ENCODE measurements at regions of chr11 and their contacts with region 1.

Region 1: DNA sequence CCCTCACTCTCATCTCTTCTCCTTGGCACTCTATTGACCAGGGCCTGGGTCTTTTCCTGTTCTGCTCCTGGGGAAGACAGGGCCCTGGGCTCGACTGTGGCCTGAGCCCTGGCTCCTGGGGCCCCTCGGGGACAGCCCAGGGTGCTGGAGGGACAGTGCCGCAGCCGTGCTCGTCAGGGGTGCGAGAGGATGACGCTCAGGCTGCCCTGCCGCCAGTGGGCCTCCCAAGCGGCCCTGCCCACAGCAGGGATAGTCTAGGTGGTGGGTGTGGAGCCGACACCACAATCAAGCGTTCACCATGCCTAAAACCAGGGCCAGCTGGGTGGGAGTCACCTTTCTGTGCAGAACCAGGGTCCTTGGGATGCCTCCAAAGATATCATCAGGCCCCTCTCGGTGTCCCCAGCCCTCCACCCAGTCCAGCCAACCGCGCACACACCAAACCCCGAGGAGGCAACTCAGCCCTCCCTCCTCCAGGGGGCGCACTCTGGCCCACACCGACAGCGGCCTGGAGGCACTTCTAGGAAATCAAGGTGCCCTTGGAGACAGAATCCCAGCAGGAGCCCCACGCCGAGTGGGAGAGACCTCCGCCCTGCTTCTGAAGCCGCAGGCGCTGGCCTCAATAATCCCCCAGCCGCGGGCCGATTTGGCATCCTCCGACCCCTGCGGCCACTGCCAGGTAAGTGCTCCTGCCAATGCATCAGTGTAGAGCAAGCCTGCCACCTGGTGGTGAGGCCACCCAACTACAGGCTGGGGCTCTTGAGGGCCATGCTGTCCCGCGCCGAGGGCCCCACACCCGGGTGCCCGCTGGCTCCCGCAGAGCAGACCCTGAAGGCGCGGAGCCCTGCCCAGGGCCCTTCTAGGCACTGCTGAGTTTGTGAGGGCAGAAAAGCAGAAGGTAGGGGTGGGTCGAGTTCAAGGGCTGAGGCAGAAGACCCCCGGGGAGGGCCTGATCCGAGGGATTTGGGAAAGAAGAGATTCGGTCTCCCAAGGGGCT is 496.4 kb downstream of the BUD13 start:
- DNase-seq: peak; percentile 84
- H3K4me3 Mint-ChIP-seq: no peak overlapping the region
- H3K27ac Mint-ChIP-seq: no peak overlapping the region
- H3K4me1 Mint-ChIP-seq: no peaks in the 10 kb centered on the region
- H3K27me3 Mint-ChIP-seq: peaks cover 15% of the 10 kb centered on the region

Region 2: GRCh38 chr11:114774599-114775361 is 1501.6 kb before region 1 on chr11:
- CTCF ChIA-PET with region 1: no interaction called
- intact Hi-C with region 1: loop called (anchors 10 kb)
- DNase-seq: peak; percentile 40
- H3K4me3 Mint-ChIP-seq: no peak overlapping the region
- H3K27ac Mint-ChIP-seq: no peak overlapping the region
- H3K4me1 Mint-ChIP-seq: no peaks in the 10 kb centered on the region
- H3K27me3 Mint-ChIP-seq: peaks cover 20% of the 10 kb centered on the region

Region 3: DNA sequence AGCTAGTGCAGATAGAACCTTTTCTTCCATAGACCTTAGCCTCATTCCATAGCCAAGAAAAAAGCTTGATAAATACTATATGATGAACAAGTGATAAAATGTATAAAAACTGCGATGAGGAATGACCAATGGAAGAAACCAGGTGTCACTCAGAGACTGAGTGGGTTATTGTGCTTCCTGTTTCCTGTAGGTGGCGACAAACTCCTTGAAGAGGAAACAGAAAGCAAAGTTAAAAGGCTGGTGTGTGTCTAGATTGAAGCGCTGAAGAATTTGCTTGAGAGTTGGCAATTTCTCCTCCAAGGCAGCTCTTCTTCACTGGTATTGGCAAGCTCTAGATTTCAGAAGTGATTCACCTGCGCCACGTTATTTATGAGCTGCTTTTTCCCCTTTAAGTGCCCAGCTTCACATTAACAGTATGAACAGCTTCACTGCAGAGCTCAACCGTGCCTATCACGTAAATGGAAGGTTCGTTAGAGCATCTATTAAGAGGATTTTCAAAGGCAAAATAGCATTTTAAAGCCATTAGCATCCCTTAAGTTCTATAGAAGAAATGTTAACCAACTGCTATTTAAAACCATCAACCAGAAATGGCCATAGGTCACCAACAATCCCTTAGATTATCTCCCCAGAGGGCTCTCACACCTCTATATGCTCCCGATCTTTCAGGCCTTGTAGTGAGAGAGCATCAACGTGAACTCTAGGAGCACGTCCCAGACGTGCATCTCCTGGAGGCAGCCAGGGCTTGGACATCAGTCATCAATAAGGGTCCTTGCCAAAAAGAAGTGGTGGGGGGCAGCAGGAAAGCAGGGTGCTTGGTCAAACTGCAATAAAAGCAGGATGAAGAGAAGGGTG is 951.5 kb before region 1 on chr11:
- CTCF ChIA-PET with region 1: no interaction called
- intact Hi-C with region 1: loop called (anchors 1 kb)
- DNase-seq: peak; percentile 34
- H3K4me3 Mint-ChIP-seq: no peak overlapping the region
- H3K27ac Mint-ChIP-seq: no peak overlapping the region
- H3K4me1 Mint-ChIP-seq: peaks cover 2% of the 10 kb centered on the region
- H3K27me3 Mint-ChIP-seq: peaks cover 3% of the 10 kb centered on the region

Region 4: DNA sequence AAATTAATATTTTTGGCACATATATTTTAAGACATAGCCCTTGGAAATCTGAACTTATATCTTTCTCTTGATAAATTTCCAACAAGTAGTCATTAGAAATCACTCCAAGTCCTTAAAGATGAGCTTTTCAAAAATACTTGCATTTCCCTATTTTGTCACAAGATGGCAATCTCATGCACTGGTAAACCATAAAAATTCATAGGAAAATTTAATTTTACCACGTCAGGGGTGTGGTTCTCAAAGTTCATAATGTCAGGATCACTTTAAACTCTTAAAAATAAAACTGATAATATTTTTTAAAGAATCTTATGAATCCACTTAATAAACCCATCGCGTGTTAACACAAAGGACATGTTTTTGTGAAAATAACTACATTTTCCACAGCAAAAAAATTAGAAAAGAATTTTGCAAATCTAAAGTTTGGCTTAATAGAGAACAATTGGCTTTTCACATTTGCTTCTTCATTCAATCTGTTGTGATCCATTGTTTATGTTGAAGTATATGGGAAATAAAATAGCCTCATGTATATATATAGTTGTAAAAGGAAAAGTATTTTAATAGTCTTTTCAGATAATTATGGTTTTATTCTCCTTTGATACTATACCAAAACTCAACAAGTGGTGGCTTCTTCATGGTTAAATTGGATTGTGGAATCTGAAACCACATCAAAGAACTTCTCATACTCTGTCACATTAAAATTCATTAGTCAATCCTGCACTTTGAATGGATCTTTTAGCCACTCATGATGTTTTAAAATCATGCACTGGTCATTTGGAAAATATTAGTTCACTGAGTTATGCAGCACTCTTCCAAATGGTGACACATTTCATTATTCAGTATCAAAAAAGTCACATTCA is 941.2 kb before region 1 on chr11:
- CTCF ChIA-PET with region 1: no interaction called
- intact Hi-C with region 1: loop called (anchors 1 kb)
- DNase-seq: no peak
- H3K4me3 Mint-ChIP-seq: no peak overlapping the region
- H3K27ac Mint-ChIP-seq: no peak overlapping the region
- H3K4me1 Mint-ChIP-seq: no peaks in the 10 kb centered on the region
- H3K27me3 Mint-ChIP-seq: peaks cover 7% of the 10 kb centered on the region

Region 5: GRCh38 chr11:116217006-116217405 is 59.3 kb before region 1 on chr11:
- CTCF ChIA-PET with region 1: interaction called, 5 read pairs
- intact Hi-C with region 1: loop called (anchors 2 kb)
- DNase-seq: peak; percentile 32
- H3K4me3 Mint-ChIP-seq: no peak overlapping the region
- H3K27ac Mint-ChIP-seq: no peak overlapping the region
- H3K4me1 Mint-ChIP-seq: no peaks in the 10 kb centered on the region
- H3K27me3 Mint-ChIP-seq: peaks cover 2% of the 10 kb centered on the region

Region 6: DNA sequence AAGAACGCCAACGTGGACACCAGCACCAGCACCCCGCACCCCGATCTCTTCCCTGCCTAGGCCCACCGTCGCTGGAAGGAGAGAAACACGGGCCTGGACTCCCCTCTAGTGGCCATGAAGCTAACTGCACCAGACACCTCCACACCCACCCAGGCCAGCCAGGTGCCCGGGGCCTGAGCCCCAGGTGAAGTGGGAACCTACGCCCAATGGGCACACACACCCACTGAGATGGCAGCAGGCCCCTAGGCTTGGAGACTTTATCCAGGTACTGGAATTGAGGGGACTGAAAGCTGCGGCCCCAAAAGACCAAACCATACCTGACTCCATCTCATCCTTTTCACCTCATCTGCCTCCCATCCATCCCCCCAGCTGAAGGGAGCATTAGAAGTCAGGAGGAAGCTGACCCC is 415.4 kb after region 1 on chr11:
- CTCF ChIA-PET with region 1: no interaction called
- intact Hi-C with region 1: loop called (anchors 5 kb)
- DNase-seq: peak; percentile 68
- H3K4me3 Mint-ChIP-seq: no peak overlapping the region
- H3K27ac Mint-ChIP-seq: no peak overlapping the region
- H3K4me1 Mint-ChIP-seq: peaks cover 2% of the 10 kb centered on the region
- H3K27me3 Mint-ChIP-seq: peaks cover 3% of the 10 kb centered on the region